Heart left ventricle (tissue), 16 donors: ENCODE measurements at regions of chr3 and their contacts with region 1.

Region 1: GRCh38 chr3:173045770-173046382 is 95.2 kb downstream of the SPATA16 start:
- DNase-seq: no peak
- ATAC-seq: no peak
- H3K4me3 ChIP-seq: no peak overlapping the region
- H3K27ac ChIP-seq: no peak overlapping the region
- H3K4me1 ChIP-seq: peaks cover 0 to 10% (median 0%) of the 10 kb centered on the region in 12 donors
- H3K27me3 ChIP-seq: no peaks in the 10 kb centered on the region
- CTCF ChIP-seq: peak; percentile 16 to 56 (median 40)
- POLR2A ChIP-seq: no peak

Region 2: DNA sequence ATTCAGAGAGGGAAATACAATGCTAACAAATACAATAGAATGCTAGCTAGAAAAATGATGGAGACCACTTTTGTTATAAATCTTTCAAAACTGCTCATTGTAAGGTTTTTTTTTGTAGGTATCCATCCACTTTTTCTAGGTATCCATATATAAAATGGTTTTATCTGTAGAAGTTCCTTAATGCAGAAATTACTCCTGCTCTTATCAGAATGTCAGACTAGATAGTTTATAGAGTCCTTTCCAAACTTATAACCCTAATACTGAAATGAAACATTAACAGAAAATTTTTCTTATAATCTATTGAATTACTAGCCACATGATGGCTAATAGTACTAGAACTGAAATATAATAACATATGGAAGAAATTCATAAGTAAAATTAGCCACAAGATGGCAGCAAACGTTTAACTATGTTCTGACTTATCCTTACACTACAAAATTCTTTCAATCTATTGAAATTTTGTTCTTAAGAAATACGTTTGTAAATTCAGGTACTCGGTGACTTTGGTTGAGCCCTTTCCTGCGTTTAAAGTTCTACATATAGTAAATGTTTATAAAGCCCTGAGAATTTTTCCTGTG is 236.8 kb before region 1 on chr3:
- intact Hi-C with region 1: loop called in 1 of 10 experiments (anchors 5 kb)
- DNase-seq: no peak
- ATAC-seq: no peak
- H3K4me3 ChIP-seq: no peak overlapping the region
- H3K27ac ChIP-seq: no peak overlapping the region
- H3K4me1 ChIP-seq: no peaks in the 10 kb centered on the region
- H3K27me3 ChIP-seq: no peaks in the 10 kb centered on the region
- CTCF ChIP-seq: peak in 11 of 12 donors; percentile 24 to 63 (median 48)
- POLR2A ChIP-seq: no peak

Region 3: DNA sequence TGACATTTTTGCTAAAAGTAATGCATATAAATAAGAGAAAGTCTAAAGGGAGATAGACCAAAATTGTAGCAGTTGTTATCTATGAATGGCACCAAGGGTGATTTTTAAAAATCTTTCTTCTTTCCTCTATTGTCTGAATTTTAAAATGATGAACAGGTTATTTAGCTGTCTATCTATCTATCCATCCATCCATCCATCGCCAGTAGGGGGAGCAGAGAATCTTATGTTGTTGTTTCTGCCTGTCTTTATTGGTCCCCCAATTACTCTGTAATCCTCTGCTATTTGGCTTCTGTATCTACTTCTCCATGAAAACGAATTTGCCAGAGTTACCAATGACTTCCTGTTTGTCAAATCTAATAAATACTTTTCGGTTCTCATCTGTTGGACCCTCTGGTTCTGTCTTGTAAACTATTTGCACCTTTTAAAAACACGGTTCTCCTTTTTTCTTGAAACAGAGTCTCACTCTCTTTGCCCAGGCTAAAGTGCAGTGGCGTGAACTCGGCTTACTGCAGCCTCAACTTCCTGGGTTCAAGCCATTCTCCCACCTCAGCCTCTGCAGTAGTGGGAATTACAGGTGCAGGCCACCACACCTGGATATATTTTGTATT is 209.4 kb before region 1 on chr3:
- intact Hi-C with region 1: loop called in 8 of 10 experiments (anchors 5 to 10 kb)
- DNase-seq: peak in 2 of 5 donors; percentile 20 to 39
- ATAC-seq: peak in 2 of 4 donors; percentile 52 to 58
- H3K4me3 ChIP-seq: no peak overlapping the region
- H3K27ac ChIP-seq: no peak overlapping the region
- H3K4me1 ChIP-seq: peaks cover 0 to 4% (median 0%) of the 10 kb centered on the region in 12 donors
- H3K27me3 ChIP-seq: no peaks in the 10 kb centered on the region
- CTCF ChIP-seq: peak; percentile 45 to 73 (median 58)
- POLR2A ChIP-seq: no peak

Region 4: DNA sequence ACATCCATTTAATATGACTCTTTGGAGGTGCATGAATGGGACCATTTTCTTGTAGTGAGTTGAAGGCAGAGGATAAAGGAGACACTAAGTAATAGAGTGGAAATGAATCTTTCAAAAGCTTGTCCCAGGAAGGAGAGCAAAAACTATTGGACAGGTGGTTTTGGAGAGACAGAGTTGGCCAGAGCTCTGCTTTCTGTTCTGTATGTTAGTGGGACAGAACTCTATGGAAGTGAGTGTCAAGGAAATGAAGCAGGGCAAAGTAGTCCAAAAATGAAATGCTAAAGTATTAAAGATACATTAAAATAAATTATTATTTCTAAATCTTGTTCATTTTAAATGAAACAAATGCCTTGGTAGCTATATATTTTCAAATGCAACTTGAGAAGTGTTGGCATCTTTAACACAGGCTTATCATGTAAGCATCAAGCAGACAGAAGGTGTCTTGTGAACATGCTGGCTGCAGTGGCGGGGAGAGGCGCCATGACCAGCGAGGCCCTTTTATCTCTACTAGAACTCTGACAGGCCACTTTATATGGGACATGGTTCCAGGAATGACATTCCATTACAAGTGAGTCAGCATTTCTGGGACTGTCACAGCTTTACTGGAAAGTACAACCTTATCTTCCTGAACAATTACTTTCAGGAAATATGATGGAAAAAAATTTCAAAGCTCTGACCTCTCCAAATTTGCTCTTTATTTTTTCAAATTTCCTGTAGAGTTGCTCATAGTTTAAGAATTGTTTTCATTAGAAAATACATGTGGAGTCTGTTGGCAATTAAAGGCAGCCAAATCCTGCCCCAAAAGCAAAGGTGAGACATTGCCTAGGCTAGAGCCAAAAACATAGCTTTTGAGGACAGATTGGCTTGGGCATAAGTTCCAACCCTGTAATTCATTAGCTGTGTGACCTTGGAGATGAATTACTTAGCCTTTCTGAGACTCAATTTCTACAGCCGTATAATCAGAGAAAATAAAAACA is 188.8 kb before region 1 on chr3:
- intact Hi-C with region 1: loop called in 1 of 10 experiments (anchors 10 kb)
- DNase-seq: peak; percentile 45 to 71 (median 59)
- ATAC-seq: peak; percentile 97 to 99 (median 98)
- H3K4me3 ChIP-seq: no peak overlapping the region
- H3K27ac ChIP-seq: peak overlapping the region in 10 of 12 donors; percentile 11 to 74 (median 58)
- H3K4me1 ChIP-seq: peaks cover 0 to 24% (median 14%) of the 10 kb centered on the region in 12 donors
- H3K27me3 ChIP-seq: no peaks in the 10 kb centered on the region
- CTCF ChIP-seq: no peak
- POLR2A ChIP-seq: no peak

Region 5: DNA sequence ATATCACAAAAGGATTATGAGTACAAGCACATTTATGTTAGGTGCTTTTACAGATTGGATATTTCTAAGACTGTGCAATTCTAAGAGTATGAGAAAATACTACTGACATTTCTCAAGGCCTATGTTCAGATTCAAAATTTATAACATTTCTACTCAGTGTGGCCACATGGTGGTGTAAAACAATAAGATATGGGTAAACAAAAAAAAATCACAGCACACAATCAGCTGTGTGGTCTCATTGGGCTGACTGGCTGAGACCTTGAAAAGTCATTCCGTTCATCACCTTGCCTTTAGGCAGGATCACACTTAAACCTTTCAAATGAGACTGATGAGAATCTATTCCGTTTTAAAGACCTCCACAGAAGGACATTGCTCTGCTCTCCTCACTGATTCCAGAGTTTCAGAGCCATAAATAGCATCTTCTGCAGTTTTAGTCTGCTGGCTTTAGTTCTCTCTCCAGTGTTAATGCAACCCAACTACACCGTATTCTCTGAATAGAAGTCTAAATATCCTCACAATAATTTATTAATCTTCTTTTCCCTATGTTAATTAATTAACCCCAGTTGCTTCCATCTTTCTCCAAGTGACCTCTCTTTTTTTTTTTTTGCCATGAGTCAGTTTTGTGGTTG is 63.0 kb before region 1 on chr3:
- intact Hi-C with region 1: loop called in 1 of 10 experiments (anchors 5 kb)
- DNase-seq: no peak
- ATAC-seq: peak; percentile 42 to 70 (median 60)
- H3K4me3 ChIP-seq: peak overlapping the region in 4 of 12 donors; percentile 11 to 28 (median 20)
- H3K27ac ChIP-seq: peak overlapping the region in 2 of 12 donors; percentile 13 to 65
- H3K4me1 ChIP-seq: peaks cover 0 to 9% (median 0%) of the 10 kb centered on the region in 12 donors
- H3K27me3 ChIP-seq: no peaks in the 10 kb centered on the region
- CTCF ChIP-seq: peak in 10 of 12 donors; percentile 14 to 47 (median 30)
- POLR2A ChIP-seq: no peak

Region 6: DNA sequence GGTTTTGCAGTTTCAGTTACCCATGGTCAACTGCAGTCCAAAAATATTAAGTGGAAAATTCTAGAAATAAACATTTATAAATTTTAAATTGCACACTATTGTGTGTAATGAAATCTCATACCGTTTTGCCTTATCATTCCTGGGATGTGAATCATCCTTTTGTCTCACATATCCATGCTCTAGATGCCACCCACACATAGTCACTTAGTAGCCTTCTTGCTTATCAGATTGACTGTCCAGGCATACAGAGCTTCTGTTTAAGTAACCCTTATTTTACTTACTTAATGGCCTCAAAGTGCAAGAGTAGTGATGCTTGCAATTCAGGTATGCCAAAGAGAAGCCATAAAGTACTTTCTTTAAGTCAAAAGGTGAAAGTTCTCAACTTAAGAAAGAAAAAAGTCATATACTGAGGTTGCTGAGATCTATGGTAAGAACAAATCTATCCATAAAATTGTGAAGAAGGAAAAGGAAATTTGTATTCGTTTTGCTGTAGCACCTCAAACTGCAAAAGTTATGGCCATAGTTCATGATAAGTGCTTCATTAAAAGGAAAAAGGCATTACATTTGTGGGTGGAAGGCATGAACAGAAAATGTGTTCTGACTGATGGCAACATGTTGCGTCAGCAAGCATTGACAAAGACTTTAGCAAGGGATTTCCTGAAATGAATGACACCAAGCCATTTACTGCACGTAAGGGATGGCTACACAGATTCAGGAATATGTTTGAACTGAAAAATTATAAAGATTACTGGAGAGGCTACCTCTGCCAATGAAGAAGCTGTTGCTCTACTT is 51.3 kb after region 1 on chr3:
- intact Hi-C with region 1: no loop called
- DNase-seq: no peak
- ATAC-seq: no peak
- H3K4me3 ChIP-seq: no peak overlapping the region
- H3K27ac ChIP-seq: no peak overlapping the region
- H3K4me1 ChIP-seq: no peaks in the 10 kb centered on the region
- H3K27me3 ChIP-seq: no peaks in the 10 kb centered on the region
- CTCF ChIP-seq: no peak
- POLR2A ChIP-seq: no peak